Dorsolateral prefrontal cortex (tissue), 120 donors: ENCODE measurements at regions of chr9 and their contacts with region 1.

Region 1: GRCh38 chr9:11128156-11128555 is 515.4 kb upstream of the PTPRD start:
- DNase-seq: no peak
- H3K4me3 ChIP-seq: no peak overlapping the region
- H3K27ac ChIP-seq: no peak overlapping the region
- H3K27me3 ChIP-seq: no peaks in the 10 kb centered on the region
- CTCF ChIP-seq: no peak

Region 2: GRCh38 chr9:11064897-11065296 is 63.3 kb before region 1 on chr9:
- intact Hi-C with region 1: loop called in 1 of 2 experiments (anchors 10 kb)
- DNase-seq: no peak
- H3K4me3 ChIP-seq: no peak overlapping the region
- H3K27ac ChIP-seq: no peak overlapping the region
- H3K27me3 ChIP-seq: no peaks in the 10 kb centered on the region
- CTCF ChIP-seq: no peak